Naive thymus-derived CD8-positive, alpha-beta T cell (primary cell): ENCODE measurements at regions of chr1 and their contacts with region 1.

Region 1: GRCh38 chr1:153946622-153947241 is at the start of gene DENND4B:
- DNase-seq: peak; percentile 46 to 85 (median 70)
- ATAC-seq: peak; percentile 57 to 60
- H3K4me3 Mint-ChIP-seq: peak within 1 kb of the TSS; percentile 91 to 98 (median 94)
- H3K27ac Mint-ChIP-seq: peak within 1 kb of the TSS; percentile 92 to 98 (median 95)
- H3K4me1 Mint-ChIP-seq: peaks cover 32 to 63% (median 47%) of the 10 kb centered on the region in 4 donors
- H3K27me3 Mint-ChIP-seq: no peaks in the 10 kb centered on the region
- polyA plus RNA-seq, gene DENND4B: 12.0 to 21.2 (median 19.0) TPM

Region 2: GRCh38 chr1:153796791-153797659 is 149.7 kb before region 1 on chr1:
- POLR2A ChIA-PET with region 1: interaction called, 18 read pairs
- DNase-seq: peak; percentile 70 to 92 (median 81)
- ATAC-seq: peak; percentile 92 to 93
- H3K4me3 Mint-ChIP-seq: peak overlapping the region in 4 of 10 donors; percentile 3 to 40 (median 32)
- H3K27ac Mint-ChIP-seq: peak overlapping the region in 9 of 10 donors; percentile 13 to 83 (median 65)
- H3K4me1 Mint-ChIP-seq: peaks cover 13 to 32% (median 26%) of the 10 kb centered on the region in 4 donors
- H3K27me3 Mint-ChIP-seq: no peaks in the 10 kb centered on the region

Region 3: DNA sequence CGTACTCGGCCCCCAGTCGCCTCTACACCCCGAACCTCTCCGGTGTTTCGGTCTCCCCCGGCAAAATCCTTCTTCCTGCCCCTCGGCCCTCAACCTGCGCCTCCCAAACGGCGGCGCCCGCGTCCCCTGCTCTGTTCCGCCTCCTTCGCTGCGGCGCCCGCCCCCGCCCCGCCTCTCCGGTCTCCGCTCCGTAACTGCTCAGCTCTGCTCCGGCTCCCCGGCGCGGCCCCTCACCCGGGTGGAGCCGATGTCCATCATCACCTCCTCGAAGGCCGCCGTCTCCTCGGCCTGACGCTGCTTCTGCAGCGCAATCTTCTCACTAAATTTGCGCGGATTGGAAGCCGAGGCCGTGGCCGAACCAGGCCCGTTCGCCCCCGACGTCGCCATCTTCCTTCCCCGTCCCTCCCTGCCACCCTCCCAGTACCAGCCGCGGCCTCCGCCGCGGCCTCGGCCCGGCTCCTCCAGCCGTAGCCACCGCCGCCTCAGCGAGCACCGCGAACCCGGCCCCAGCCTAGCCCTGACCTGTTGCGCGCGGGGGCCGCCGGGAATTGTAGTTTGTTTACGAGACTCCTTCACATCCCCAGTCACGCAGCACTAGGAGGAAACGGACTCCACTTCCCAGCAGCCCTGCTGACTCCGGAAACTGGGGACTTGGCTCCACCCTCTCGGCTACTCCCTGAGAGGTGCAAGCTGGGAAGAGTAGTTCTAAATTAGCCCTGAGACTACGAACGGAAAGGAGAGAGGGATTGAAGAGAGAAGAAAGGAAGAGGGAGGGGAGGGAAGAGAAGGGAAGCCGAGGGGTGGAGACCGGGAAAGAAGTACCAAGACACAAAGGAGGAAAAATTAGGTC is 11.6 kb after region 1 on chr1 and contains the start of gene CRTC2:
- POLR2A ChIA-PET with region 1: interaction called, 315 read pairs
- DNase-seq: peak; percentile 91 to 98 (median 96)
- ATAC-seq: peak; percentile 84 to 88
- H3K4me3 Mint-ChIP-seq: peak within 1 kb of the TSS; percentile 86 to 100 (median 98)
- H3K27ac Mint-ChIP-seq: peak within 1 kb of the TSS; percentile 85 to 98 (median 96)
- H3K4me1 Mint-ChIP-seq: peaks cover 37 to 79% (median 63%) of the 10 kb centered on the region in 4 donors
- H3K27me3 Mint-ChIP-seq: no peaks in the 10 kb centered on the region
- polyA plus RNA-seq, gene CRTC2: 21.4 to 49.6 (median 27.1) TPM

Region 4: DNA sequence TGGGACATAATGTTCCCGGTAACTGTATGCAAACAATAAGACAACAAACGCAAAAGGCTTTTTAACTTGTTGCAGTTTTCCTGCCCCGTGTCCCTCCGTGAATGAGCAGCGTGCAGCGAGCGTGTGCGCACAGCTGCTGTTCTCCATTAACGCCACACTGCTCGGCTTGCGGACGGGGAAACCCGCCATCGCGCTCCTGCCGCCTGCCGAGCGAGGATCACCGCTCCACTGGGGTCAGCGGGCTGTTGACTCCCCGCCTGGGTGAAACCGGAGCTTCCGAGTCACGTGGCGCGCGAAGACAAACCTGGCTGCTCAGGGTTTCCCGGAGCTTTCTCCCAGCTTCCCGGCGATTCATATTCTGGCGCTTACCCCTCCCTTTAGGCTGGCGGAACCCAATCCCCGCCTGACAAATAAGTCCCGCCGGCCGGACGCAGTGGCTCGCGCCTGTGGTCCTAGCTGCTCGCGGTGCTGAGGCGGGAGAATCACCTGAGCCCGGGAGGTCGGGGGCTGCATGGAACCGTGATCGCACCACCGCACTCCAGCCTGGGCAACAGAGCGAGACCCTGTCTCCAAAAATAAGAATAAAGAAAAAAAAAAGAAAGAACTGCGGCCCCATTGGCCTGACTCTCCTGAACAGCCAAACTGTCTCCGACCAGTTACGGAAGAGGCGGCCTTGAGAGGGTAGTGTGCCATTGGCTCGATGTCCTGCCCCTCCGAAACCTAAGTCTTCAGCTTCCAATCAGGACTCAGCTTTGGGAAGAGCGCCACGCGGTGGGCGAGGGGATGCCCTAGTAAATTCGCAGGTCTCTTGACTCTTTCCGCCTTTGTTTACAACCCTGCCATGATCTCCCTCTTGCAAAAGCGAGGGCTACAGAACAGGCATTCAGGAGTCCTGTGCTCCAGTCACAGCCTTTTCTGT is 20.6 kb after region 1 on chr1 and contains the start of gene CREB3L4:
- POLR2A ChIA-PET with region 1: interaction called, 315 read pairs
- DNase-seq: peak; percentile 68 to 93 (median 83)
- ATAC-seq: peak; percentile 88 to 91
- H3K4me3 Mint-ChIP-seq: peak within 1 kb of the TSS; percentile 87 to 97 (median 94)
- H3K27ac Mint-ChIP-seq: peak within 1 kb of the TSS; percentile 92 to 99 (median 95)
- H3K4me1 Mint-ChIP-seq: peaks cover 31 to 68% (median 64%) of the 10 kb centered on the region in 4 donors
- H3K27me3 Mint-ChIP-seq: no peaks in the 10 kb centered on the region
- polyA plus RNA-seq, gene CREB3L4: 4.3 to 6.0 (median 4.4) TPM

Region 5: GRCh38 chr1:153977250-153978240 is 30.8 kb after region 1 on chr1 and contains the start of gene JTB:
- POLR2A ChIA-PET with region 1: interaction called, 66 read pairs
- DNase-seq: peak; percentile 73 to 92 (median 78)
- ATAC-seq: peak; percentile 96
- H3K4me3 Mint-ChIP-seq: peak within 1 kb of the TSS; percentile 91 to 99 (median 97)
- H3K27ac Mint-ChIP-seq: peak within 1 kb of the TSS; percentile 87 to 99 (median 96)
- H3K4me1 Mint-ChIP-seq: peaks cover 11 to 42% (median 37%) of the 10 kb centered on the region in 4 donors
- H3K27me3 Mint-ChIP-seq: no peaks in the 10 kb centered on the region
- polyA plus RNA-seq, gene JTB: 302 to 384 (median 322) TPM